Head of caudate nucleus (tissue), 42 donors: ENCODE measurements at regions of chr14 and their contacts with region 1.

Region 1: DNA sequence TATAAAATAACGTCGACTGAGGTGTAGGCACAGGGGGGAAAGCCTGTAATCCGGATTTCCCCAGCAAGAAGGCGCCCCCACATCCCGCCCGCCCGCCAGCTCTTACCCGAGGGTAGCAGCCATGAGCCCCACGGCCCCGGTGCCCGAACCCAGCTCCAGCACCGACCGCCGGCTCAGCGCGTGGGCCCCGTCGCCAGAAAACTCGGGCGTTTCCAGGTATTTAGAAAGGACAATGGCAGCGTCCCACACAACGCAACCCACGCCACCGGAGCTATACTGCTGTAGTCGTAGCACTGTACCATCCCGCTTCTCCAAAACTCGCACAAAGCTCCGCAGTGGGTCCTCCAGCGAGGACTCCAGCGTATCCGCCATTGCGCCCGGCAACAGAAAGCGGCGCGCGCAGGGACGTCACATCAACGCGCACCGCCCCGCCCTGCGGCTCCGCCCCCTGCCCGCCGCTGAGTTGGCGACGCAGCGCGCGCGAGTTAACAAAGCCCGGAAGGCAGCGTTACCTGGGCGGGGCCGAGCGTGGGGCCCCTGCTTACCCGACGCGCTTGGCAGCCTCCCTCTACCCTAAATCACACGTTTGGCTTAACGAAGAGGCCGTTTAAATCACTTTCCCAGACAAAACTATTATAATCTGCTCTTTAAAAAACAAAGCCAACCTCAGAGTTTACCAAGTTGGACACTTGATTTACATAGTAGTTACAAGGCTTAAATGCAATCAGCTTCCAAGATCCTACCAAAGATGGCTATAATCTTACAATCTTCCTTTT is at the start of gene VCPKMT:
- DNase-seq: peak; percentile 81 to 97 (median 95)

Region 2: DNA sequence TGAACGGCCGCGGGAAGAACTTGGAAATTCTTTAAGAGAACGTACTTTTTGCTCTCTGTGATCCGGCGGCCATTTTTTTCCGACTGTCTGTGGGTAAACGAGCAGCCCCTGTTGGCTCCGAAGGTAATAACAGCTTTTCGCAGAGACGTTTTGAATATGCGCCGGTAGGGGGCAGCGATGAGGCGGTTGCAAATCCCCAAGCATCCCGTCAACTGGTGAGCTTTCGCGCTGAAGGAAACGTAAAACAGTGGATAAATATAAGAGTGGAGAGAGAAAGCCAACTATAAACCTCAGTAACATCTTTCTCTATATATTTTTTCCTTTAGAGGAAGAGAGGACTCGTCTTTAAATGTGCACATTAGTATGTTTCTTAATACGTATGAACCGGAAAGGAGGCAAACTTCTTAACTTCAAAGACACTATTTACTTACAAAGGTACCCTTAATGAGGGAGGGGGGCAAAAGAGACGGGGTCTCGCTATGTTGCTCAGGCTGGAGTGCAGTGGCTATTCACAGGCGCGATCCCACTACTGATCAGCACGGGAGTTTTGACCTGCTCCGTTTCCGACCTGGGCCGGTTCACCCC is 254.2 kb before region 1 on chr14:
- intact Hi-C with region 1: loop called (anchors 5 kb)
- DNase-seq: peak; percentile 70 to 94 (median 84)

Region 3: GRCh38 chr14:49892636-49893308 is 223.6 kb before region 1 on chr14 and contains the start of gene ARF6:
- intact Hi-C with region 1: loop called (anchors 2 kb)
- DNase-seq: peak; percentile 93 to 99 (median 98)

Region 4: GRCh38 chr14:50085570-50086320 is 30.6 kb before region 1 on chr14:
- intact Hi-C with region 1: no loop called
- DNase-seq: peak in 28 of 42 donors; percentile 9 to 80 (median 46)

Region 5: GRCh38 chr14:50231475-50232275 is 115.3 kb after region 1 on chr14 and contains the start of gene SOS2:
- intact Hi-C with region 1: loop called (anchors 5 kb)
- DNase-seq: peak; percentile 68 to 94 (median 88)

Region 6: DNA sequence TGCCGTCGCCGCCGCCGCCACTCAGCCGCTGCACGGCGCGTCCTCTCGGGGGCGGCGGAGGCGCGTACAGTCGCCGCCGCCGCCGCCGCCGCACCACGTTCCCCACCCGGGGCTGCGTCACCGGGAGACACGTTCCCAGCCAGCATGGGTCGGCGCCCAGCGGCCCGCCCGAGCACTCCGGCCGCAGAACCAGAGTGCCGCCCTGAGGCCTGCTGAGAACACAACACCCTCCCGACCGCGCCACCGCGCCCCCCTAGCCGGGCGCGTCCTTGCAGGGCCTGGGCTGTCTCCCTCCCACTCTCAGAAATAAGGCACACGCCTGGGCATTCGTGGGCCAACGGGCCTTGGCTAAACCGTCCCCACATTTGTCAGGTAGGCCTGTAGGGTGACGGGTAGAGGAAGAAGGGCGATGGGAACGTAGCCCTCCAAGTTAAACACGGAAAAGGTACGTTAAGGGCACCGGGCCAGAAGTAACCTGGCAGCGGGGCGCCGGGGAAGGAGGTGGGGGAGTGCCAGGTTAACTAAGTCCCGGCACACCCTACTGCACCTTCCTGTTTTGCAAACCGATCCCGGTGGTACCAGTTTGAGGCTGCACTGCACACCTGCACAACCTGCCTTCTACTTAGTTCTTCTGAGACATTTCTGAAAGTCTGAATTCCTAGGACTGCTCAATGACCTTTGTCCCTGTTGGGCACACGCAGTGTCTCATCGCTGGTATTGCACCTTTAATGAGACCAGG is 416.3 kb after region 1 on chr14 and contains the start of gene MAP4K5:
- intact Hi-C with region 1: loop called (anchors 10 kb)
- DNase-seq: peak; percentile 80 to 97 (median 93)